Posterior vena cava (tissue), 2 donors: ENCODE measurements at regions of chr6 and their contacts with region 1.

Region 1: DNA sequence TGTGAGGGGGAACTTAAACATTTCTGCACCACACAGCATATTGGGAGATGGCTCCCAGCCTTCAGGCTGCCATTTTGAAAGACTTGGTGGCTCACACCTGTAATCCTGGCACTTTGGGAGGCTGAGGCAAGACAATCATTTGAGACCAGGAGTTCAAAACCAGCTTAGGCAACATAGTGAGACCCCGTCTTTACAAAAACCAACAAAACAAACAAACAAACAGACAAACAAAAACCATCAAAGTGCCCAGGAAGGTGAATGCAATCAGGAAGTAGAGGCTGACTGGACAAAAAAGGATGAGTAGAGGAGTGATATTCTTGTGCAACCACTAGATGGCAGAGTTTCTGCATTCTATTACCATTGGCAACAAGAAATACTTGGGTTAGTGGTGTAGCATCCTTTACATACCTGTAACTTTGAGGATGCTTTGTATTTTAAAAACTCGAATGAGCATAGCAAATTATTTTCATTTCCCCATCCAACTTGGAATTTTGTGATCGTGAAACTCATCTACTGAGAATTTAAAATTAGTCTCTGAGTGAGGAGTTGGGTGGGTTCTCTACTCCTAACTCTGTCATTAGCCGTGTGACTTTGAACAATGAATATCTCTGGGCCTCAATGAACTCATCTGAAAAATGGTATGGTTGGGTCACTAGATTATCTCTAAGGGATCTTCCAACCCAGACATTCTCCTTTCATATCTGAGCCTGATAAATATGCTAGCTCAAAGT is 84.4 kb downstream of the CRYBG1 start:
- DNase-seq: no peak

Region 2: GRCh38 chr6:106360410-106360988 is 84.4 kb before region 1 on chr6 and contains the start of gene CRYBG1:
- intact Hi-C with region 1: no loop called
- DNase-seq: peak; percentile 87
- total RNA-seq, gene CRYBG1: 4.6 to 5.5 TPM

Region 3: DNA sequence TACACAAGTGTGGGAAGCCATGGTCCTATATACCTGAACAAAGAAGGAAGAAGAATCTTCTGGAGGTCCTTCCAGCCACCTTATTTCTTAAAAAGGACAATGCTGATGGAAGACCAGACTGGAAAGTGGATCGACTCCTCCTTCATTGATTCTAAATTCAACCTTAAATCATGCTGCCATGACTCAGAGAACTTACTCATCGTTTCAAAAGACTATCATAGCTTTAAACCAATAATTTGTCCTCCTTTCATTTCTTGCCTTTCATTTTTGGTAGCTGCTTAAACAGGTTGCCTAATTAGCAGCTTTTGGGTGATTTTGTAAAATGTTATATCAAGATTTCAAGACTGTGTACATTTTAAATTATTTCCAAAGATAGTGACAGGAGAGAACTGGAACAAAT is 123.6 kb after region 1 on chr6:
- intact Hi-C with region 1: loop called (anchors 5 to 10 kb)
- DNase-seq: no peak

Region 4: GRCh38 chr6:106684011-106684410 is 239.1 kb after region 1 on chr6:
- intact Hi-C with region 1: loop called in 1 of 2 experiments (anchors 5 kb)
- DNase-seq: no peak